ENCODE measurements at regions of chr1 and their contacts with region 1.

Region 1: GRCh38 chr1:173429471-173430402 is 47.4 kb upstream of the PRDX6 start:
- DNase-seq: peak; percentile 39
- ATAC-seq: peak; percentile 92
- H3K4me3 ChIP-seq: peak overlapping the region; percentile 19 to 32 (median 32); a peak in 4 of 6 replicates
- H3K27ac ChIP-seq: peak overlapping the region; percentile 4
- H3K4me1 ChIP-seq: peaks cover 17% of the 10 kb centered on the region; the same call in 1 of the 2 replicates
- H3K27me3 ChIP-seq: no peaks in the 10 kb centered on the region
- CTCF ChIP-seq: peak; percentile 67
- EP300 ChIP-seq: no peak
- POLR2A ChIP-seq: no peak
- RAD21 ChIP-seq: no peak

Region 2: GRCh38 chr1:173181791-173182190 is 247.9 kb before region 1 on chr1:
- CTCF ChIA-PET with region 1: no interaction called
- POLR2A ChIA-PET with region 1: no interaction called
- in situ Hi-C with region 1: no loop called
- intact Hi-C with region 1: no loop called
- DNase-seq: no peak
- ATAC-seq: no peak
- H3K4me3 ChIP-seq: no peak overlapping the region
- H3K27ac ChIP-seq: no peak overlapping the region
- H3K4me1 ChIP-seq: no peaks in the 10 kb centered on the region
- H3K27me3 ChIP-seq: no peaks in the 10 kb centered on the region
- CTCF ChIP-seq: no peak
- EP300 ChIP-seq: no peak
- POLR2A ChIP-seq: no peak
- RAD21 ChIP-seq: no peak

Region 3: DNA sequence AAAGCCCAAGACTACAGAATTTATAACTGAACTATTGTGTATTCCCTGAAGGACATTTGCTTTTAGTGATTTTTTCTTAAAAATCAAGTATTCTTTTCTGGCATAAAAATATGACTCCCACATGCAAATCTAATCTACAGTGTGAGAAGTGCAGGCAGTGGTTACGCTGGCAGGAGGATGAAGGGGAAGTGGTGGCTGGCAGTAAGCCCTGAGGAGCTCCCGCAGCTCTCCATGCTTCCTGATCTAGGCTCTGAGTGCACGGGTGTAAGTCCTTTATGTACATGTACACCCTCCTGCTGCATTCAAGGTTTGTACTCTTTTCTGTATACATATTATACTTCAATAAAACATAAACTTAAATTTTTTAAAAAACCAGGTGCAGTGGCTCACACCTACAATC is 20.1 kb before region 1 on chr1:
- CTCF ChIA-PET with region 1: no interaction called
- POLR2A ChIA-PET with region 1: no interaction called
- in situ Hi-C with region 1: no loop called
- intact Hi-C with region 1: no loop called
- DNase-seq: no peak
- ATAC-seq: no peak
- H3K4me3 ChIP-seq: no peak overlapping the region
- H3K27ac ChIP-seq: no peak overlapping the region
- H3K4me1 ChIP-seq: no peaks in the 10 kb centered on the region
- H3K27me3 ChIP-seq: no peaks in the 10 kb centered on the region
- CTCF ChIP-seq: no peak
- EP300 ChIP-seq: no peak
- POLR2A ChIP-seq: no peak
- RAD21 ChIP-seq: no peak

Region 4: GRCh38 chr1:173476664-173477285 is 47.0 kb after region 1 on chr1:
- CTCF ChIA-PET with region 1: interaction called, 4 read pairs
- POLR2A ChIA-PET with region 1: interaction called, 10 read pairs
- in situ Hi-C with region 1: no loop called
- intact Hi-C with region 1: loop called (anchors 1 kb)
- DNase-seq: peak; percentile 93
- ATAC-seq: peak; percentile 87
- H3K4me3 ChIP-seq: peak overlapping the region; percentile 75 to 96 (median 91)
- H3K27ac ChIP-seq: peak overlapping the region; percentile 87
- H3K4me1 ChIP-seq: peaks cover 60% of the 10 kb centered on the region
- H3K27me3 ChIP-seq: no peaks in the 10 kb centered on the region; a peak in 1 of 5 replicates
- CTCF ChIP-seq: peak; percentile 51
- EP300 ChIP-seq: no peak
- POLR2A ChIP-seq: peak in 1 of 2 experiments; percentile 78; a peak in 3 of 4 replicates
- RAD21 ChIP-seq: no peak

Region 5: DNA sequence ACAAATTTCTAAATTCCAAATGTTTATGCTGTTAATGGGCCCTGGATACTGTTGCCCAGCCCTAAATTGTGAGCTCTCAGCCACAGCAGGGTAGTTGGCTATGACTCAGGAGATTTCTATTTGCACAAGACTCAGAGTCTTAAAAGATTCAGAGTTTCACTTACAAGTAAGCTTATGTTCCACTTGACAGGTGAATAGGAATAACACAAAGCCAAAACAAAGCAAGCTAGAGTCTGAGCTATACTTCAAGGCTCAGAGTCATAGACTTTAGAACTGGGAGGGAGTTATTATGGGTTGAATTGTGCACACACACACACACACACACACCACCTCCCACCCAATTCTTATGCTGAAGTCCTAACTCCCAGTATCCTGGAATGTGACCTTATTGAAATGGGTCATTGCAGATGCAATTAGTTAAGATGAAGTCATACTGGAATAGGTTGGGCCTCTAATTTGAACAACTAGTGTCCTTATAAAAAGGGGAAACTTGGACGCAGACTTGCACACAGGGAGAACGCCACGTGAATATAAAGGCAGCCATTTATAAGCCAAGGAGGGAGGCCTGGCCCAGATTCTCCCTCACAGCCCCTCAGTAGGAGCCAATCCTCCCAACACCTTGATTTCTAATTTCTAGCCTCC is 77.6 kb after region 1 on chr1:
- CTCF ChIA-PET with region 1: interaction called, 36 read pairs
- POLR2A ChIA-PET with region 1: no interaction called
- in situ Hi-C with region 1: loop called (anchors 5 kb)
- intact Hi-C with region 1: loop called (anchors 1 kb)
- DNase-seq: no peak
- ATAC-seq: no peak
- H3K4me3 ChIP-seq: no peak overlapping the region
- H3K27ac ChIP-seq: no peak overlapping the region
- H3K4me1 ChIP-seq: peaks cover 20% of the 10 kb centered on the region
- H3K27me3 ChIP-seq: no peaks in the 10 kb centered on the region
- CTCF ChIP-seq: no peak
- EP300 ChIP-seq: no peak
- POLR2A ChIP-seq: no peak
- RAD21 ChIP-seq: no peak

Region 6: GRCh38 chr1:173714759-173715537 is 285.2 kb after region 1 on chr1 and contains the start of gene KLHL20:
- CTCF ChIA-PET with region 1: no interaction called
- POLR2A ChIA-PET with region 1: interaction called, 3 read pairs
- in situ Hi-C with region 1: no loop called
- intact Hi-C with region 1: loop called (anchors 10 kb)
- DNase-seq: peak; percentile 89
- ATAC-seq: peak; percentile 98
- H3K4me3 ChIP-seq: peak within 1 kb of the TSS; percentile 74 to 97 (median 84)
- H3K27ac ChIP-seq: peak within 1 kb of the TSS; percentile 74
- H3K4me1 ChIP-seq: peaks cover 31% of the 10 kb centered on the region
- H3K27me3 ChIP-seq: peaks cover 0 to 4% of the 10 kb centered on the region in 2 experiments; a peak in 2 of 5 replicates
- CTCF ChIP-seq: peak; percentile 41
- EP300 ChIP-seq: peak in 1 of 2 experiments; percentile 59; a peak in 2 of 4 replicates
- POLR2A ChIP-seq: peak; percentile 74 to 81
- RAD21 ChIP-seq: no peak; the same call in 1 of the 2 replicates
- total RNA-seq, gene KLHL20: 14.3 and 18.8 TPM in 2 replicates

Region 7: DNA sequence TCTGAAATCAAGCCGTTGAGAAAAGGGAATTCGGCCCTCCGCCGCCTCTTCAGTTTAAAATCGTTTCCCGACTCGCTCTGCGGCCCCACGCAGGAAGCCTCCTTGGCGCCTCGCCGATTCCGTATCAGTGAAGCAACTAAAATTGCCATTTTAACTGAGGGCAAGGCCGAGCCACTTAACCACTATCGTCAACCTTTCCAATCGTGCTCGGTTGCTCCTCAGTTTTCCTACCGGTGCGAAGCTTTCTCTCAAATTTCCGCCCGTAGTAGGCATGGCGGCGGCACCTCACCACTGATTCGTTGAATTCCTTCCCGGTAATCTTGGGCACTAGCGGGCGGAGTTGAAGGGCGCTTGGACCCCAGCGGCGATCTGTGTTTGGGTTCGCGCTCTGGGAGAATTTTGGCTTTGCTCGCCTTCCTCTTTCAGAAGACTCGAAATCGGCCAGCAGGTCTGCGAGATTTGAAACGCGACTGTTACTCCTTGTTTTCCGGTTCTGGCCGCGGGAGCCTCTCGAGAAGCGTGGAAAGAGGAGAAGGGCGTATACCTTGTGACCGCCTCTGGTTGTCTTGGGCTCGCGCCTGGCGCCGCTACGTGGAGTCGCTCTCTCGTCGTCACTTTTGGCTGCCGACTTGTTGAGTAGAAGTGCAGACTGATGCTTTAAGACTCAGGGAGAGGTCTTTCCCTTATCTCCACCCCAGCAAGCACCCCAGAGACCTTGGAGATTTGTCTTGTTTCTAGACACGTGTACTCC is 394.8 kb after region 1 on chr1 and contains the starts of genes CENPL and DARS2:
- CTCF ChIA-PET with region 1: no interaction called
- POLR2A ChIA-PET with region 1: no interaction called
- in situ Hi-C with region 1: loop called (anchors 5 kb)
- intact Hi-C with region 1: loop called (anchors 2 kb)
- DNase-seq: peak; percentile 96
- ATAC-seq: peak; percentile 94
- H3K4me3 ChIP-seq: peak within 1 kb of the TSS; percentile 69 to 99 (median 80)
- H3K27ac ChIP-seq: peak within 1 kb of the TSS; percentile 89
- H3K4me1 ChIP-seq: peaks cover 45% of the 10 kb centered on the region
- H3K27me3 ChIP-seq: no peaks in the 10 kb centered on the region; a peak in 1 of 5 replicates
- CTCF ChIP-seq: no peak
- EP300 ChIP-seq: no peak; a peak in 1 of 4 replicates
- POLR2A ChIP-seq: peak; percentile 63 to 80
- RAD21 ChIP-seq: no peak
- total RNA-seq, gene CENPL: 14.2 and 17.9 TPM in 2 replicates
- total RNA-seq, gene DARS2: 27.7 and 45.4 TPM in 2 replicates

Measured in HepG2 (cell line).